ENCODE measurements at regions of chr3 and their contacts with region 1.

Region 1: DNA sequence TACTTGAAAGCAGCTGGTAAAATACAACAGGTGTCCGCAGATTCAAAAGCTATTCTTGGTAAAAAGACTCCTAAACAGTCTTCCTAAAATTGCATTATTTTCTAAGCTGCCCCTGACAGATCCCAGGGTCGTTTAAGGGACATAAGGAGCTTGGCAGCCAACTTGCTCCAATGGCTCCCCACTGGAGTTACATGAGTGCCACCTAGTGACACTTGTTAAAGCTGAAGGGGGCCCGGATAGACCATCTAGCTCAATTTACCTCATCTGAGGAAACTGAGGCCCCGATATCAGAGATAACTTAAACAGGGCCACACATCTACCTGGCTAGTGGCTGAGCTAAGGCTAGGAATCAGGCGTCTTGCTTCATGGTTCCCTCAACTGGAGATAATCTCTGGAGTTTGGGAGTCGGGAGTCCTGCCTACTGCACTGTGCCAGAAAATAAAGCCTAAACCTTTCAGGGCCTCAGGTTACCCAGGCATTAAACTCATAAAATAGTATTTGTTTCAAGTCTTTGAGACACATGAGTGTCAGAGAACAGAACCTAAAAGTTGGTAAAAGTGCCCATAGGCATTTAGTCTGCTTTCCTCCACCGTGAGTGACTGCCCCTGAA is 6.5 kb upstream of the TBC1D23 start:
- DNase-seq: peak; percentile 47 to 90
- H3K4me3 ChIP-seq: no peak overlapping the region
- H3K27ac ChIP-seq: peak overlapping the region in 1 of 5 donors; percentile 30
- H3K4me1 ChIP-seq: peaks cover 0 to 12% (median 6%) of the 10 kb centered on the region in 4 donors
- H3K27me3 ChIP-seq: no peaks in the 10 kb centered on the region
- CTCF ChIP-seq: peak in 5 of 7 experiments; percentile 42 to 71 (median 61)
- EP300 ChIP-seq: no peak
- POLR2A ChIP-seq: no peak

Region 2: GRCh38 chr3:100068826-100069225 is 185.4 kb before region 1 on chr3:
- intact Hi-C with region 1: loop called (anchors 10 kb)
- DNase-seq: peak; percentile 80 to 89
- H3K4me3 ChIP-seq: no peak overlapping the region
- H3K27ac ChIP-seq: peak overlapping the region in 2 of 5 donors; percentile 3 to 30
- H3K4me1 ChIP-seq: peaks cover 5 to 53% (median 10%) of the 10 kb centered on the region in 4 donors
- H3K27me3 ChIP-seq: no peaks in the 10 kb centered on the region
- CTCF ChIP-seq: peak in 5 of 7 experiments; percentile 63 to 83 (median 72)
- EP300 ChIP-seq: no peak
- POLR2A ChIP-seq: no peak

Region 3: DNA sequence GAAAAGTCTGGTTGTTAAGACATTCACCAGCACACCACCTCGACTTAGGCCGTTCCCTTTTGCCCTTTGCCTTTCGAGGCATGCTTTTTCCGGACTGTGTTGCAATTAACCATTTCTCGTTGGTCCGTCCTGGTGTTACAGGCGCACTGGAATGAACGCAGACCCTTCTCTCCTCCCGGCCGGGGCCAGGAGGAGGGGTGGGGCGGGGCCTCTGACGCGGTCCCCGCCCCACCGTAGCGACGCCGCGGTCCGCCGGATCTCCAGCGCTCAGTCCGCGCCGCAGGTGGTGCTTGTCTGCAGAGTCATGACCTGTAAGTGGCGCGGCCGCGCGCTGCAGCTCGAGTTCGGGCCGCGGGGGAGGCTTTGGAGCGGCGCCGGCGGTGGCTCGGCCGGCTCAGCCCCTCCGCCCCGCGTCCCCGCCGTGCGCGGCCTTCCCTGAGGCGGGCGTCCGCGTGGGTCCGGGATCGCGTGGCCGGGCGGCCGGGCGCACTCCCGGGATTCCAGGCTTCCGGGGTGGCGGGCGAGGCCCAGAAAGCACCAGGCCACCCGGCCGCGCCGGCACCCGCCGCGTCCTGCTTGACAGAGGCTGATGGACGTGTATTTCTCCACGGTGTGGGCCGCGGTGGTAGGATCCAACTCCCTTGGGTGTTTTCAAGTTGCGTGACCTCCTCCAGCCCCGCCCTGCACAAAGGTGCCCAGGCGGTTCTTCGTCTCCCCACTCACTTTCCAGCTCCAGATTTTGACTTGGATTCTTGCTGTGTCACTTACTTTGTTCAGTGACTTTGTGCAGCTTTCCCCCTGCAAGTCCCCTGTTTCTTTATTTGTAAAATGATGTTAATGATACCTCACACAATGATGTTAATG is 80.4 kb after region 1 on chr3 and contains the start of gene NIT2:
- intact Hi-C with region 1: no loop called
- DNase-seq: peak; percentile 90 to 95
- H3K4me3 ChIP-seq: peak within 1 kb of the TSS; percentile 65 to 78 (median 71)
- H3K27ac ChIP-seq: peak within 1 kb of the TSS; percentile 81 to 94 (median 91)
- H3K4me1 ChIP-seq: peaks cover 4 to 27% (median 16%) of the 10 kb centered on the region in 4 donors
- H3K27me3 ChIP-seq: no peaks in the 10 kb centered on the region
- CTCF ChIP-seq: no peak
- EP300 ChIP-seq: no peak
- POLR2A ChIP-seq: no peak
- total RNA-seq, gene NIT2: 4.3 to 53.1 (median 35.1) TPM